Activated T-helper 1 cell treated with anti-CD3 and anti-CD28 coated beads, Interleukin-12 subunit alpha, Interleukin-12 subunit beta, Interleukin-2, Interleukin-4 antibody, amounts not matched to agents 30 ng/mL and 10 ng/mL and 1 ng/mL, durations not matched to agents 14 hours and 24 hours and 36 hours (primary cell): ENCODE measurements at regions of chr15 and their contacts with region 1.

Region 1: GRCh38 chr15:27705056-27705455 is 394.1 kb downstream of the OCA2 start:
- DNase-seq: no peak
- H3K4me3 Mint-ChIP-seq: no peak overlapping the region
- H3K27ac Mint-ChIP-seq: no peak overlapping the region
- H3K4me1 Mint-ChIP-seq: no peaks in the 10 kb centered on the region
- H3K27me3 Mint-ChIP-seq: no peaks in the 10 kb centered on the region

Region 2: DNA sequence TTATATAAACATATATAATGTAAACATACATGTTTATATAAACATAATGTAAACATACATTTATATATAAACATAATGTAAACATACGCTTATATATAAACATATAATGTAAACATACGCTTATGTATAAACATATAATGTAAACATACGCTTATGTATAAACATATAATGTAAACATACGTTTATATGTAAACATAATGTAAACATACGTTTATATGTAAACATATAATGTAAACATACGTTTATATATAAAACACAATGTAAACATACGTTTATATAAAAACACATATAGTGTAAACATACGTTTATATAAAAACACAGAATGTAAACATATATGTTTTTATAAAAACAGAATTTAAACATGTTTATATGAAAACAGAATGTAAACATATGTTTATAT is 396.5 kb before region 1 on chr15:
- intact Hi-C with region 1: no loop called
- DNase-seq: no peak
- H3K4me3 Mint-ChIP-seq: no peak overlapping the region
- H3K27ac Mint-ChIP-seq: no peak overlapping the region
- H3K4me1 Mint-ChIP-seq: no peaks in the 10 kb centered on the region
- H3K27me3 Mint-ChIP-seq: no peaks in the 10 kb centered on the region

Region 3: GRCh38 chr15:27328608-27329007 is 376.4 kb before region 1 on chr15:
- intact Hi-C with region 1: no loop called
- DNase-seq: no peak
- H3K4me3 Mint-ChIP-seq: no peak overlapping the region
- H3K27ac Mint-ChIP-seq: no peak overlapping the region
- H3K4me1 Mint-ChIP-seq: no peaks in the 10 kb centered on the region
- H3K27me3 Mint-ChIP-seq: no peaks in the 10 kb centered on the region

Region 4: GRCh38 chr15:27491666-27492621 is 213.1 kb before region 1 on chr15:
- intact Hi-C with region 1: loop called (anchors 10 kb)
- DNase-seq: no peak
- H3K4me3 Mint-ChIP-seq: no peak overlapping the region
- H3K27ac Mint-ChIP-seq: no peak overlapping the region
- H3K4me1 Mint-ChIP-seq: no peaks in the 10 kb centered on the region
- H3K27me3 Mint-ChIP-seq: no peaks in the 10 kb centered on the region